Dendritic cell treated with granulocyte-macrophage colony-stimulating factor and Interleukin-4, amounts not matched to agents 40 ng/mL and 50 ng/mL, for 4 days (primary cell): ENCODE measurements at regions of chr21 and their contacts with region 1.

Region 1: DNA sequence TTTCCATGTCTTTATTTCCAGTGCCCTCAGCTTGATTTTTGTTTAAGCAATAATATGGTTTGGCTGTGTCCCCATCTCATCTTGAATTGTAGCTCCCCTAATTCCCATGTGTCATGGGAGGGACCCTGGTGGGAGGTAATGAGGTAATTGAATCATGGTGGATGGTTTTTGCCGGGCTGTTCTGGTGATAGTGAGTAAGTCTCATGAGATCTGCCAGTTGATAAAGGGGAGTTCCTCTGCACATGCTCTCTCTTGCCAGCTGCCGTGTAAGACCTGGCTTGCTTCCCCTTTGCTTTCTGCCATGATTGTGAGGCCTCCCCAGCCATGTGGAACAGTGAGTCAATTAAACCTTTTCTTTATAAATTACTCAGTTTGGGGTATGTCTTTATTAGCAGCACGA is 559.6 kb upstream of the ADAMTS5 start:
- H3K4me3 Mint-ChIP-seq: no peak overlapping the region
- H3K27ac Mint-ChIP-seq: no peak overlapping the region
- H3K4me1 Mint-ChIP-seq: no peaks in the 10 kb centered on the region
- H3K27me3 Mint-ChIP-seq: no peaks in the 10 kb centered on the region

Region 2: DNA sequence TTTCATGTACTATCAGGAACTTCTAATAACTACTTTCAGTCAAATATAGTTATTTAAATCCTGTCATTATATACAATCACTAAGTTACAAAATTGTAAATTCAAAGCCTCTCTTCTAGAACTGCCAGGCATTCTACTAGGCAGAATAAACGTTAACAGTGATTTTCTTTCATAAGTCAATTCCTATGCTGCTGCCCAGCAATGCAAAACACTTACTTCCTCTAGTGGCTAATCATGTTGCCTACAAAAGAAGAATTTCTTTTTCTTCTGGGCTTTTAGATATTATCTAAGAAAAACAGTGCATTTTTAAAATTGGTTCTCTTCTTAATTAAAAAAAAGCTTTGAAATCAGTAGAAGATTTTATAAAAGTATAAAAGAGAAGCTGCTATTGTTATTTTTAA is 49.8 kb before region 1 on chr21:
- intact Hi-C with region 1: loop called (anchors 5 kb)
- H3K4me3 Mint-ChIP-seq: no peak overlapping the region
- H3K27ac Mint-ChIP-seq: no peak overlapping the region
- H3K4me1 Mint-ChIP-seq: no peaks in the 10 kb centered on the region
- H3K27me3 Mint-ChIP-seq: no peaks in the 10 kb centered on the region

Region 3: GRCh38 chr21:27564684-27565301 is 38.3 kb after region 1 on chr21:
- intact Hi-C with region 1: no loop called
- H3K4me3 Mint-ChIP-seq: no peak overlapping the region
- H3K27ac Mint-ChIP-seq: no peak overlapping the region
- H3K4me1 Mint-ChIP-seq: no peaks in the 10 kb centered on the region
- H3K27me3 Mint-ChIP-seq: no peaks in the 10 kb centered on the region

Region 4: DNA sequence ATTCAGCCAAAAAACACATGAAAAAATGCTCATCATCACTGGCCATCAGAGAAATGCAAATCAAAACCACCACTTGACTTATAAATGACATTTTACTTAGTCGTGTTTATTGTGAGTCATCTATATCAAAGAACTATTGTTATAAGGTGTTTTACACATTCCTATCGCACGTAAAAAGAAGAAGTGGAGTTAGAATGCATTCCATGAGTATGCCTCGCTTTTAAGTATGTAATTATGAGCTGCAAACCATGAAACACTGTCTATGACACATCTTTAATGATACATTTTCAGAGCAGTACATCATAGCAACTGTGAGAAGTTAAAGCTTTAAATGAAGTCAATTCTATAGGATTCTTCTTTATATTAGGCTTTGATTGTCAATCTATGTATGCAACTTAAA is 54.7 kb after region 1 on chr21:
- intact Hi-C with region 1: no loop called
- H3K4me3 Mint-ChIP-seq: no peak overlapping the region
- H3K27ac Mint-ChIP-seq: no peak overlapping the region
- H3K4me1 Mint-ChIP-seq: no peaks in the 10 kb centered on the region
- H3K27me3 Mint-ChIP-seq: no peaks in the 10 kb centered on the region

Region 5: DNA sequence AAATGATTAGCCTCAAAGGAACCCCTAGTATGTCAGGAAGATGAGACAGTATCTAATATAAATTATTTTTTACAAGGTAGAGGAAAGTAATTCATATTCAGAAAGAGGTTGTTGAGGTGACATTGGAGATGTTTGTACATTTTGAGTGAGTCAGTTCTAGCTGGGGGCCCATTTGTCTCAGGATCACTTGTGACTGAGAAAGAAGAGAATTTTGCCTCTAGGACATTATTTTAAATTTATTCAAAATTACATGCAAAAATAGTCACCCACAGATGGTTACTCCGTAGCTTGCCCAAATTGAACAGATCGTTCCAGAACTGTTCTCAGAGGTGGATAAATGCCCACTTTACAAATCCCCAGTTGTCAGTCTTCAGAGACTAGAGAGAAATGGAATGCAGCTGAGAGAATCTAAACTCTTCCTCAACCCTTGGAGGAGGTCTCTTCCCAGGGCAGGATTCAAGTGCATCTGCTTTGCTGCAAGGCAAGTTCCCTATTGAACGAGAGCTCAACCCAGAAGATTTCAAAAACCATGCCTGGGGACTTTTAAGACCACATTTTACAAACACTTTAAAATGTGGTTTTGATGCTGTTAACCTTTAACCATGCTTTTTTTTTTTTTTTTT is 428.2 kb after region 1 on chr21:
- intact Hi-C with region 1: no loop called
- H3K4me3 Mint-ChIP-seq: no peak overlapping the region
- H3K27ac Mint-ChIP-seq: no peak overlapping the region
- H3K4me1 Mint-ChIP-seq: peaks cover 10% of the 10 kb centered on the region
- H3K27me3 Mint-ChIP-seq: peaks cover 15% of the 10 kb centered on the region